ENCODE measurements at regions of chr2 and their contacts with region 1.

Region 1: GRCh38 chr2:45585267-45585861 is 25.7 kb downstream of the SRBD1 start:
- DNase-seq: peak in 1 of 2 experiments; percentile 28
- H3K4me3 ChIP-seq: no peak overlapping the region
- H3K4me3 Mint-ChIP-seq: no peak overlapping the region
- H3K27ac Mint-ChIP-seq: no peak overlapping the region
- H3K4me1 ChIP-seq: no peaks in the 10 kb centered on the region
- H3K4me1 Mint-ChIP-seq: no peaks in the 10 kb centered on the region
- H3K27me3 ChIP-seq: no peaks in the 10 kb centered on the region
- H3K27me3 Mint-ChIP-seq: no peaks in the 10 kb centered on the region
- CTCF ChIP-seq: peak; percentile 73 to 76

Region 2: GRCh38 chr2:45611020-45611737 is 25.8 kb after region 1 on chr2 and contains the start of gene SRBD1:
- CTCF ChIA-PET with region 1: interaction called, 5 read pairs
- POLR2A ChIA-PET with region 1: no interaction called
- intact Hi-C with region 1: loop called (anchors 1 kb)
- DNase-seq: peak; percentile 97 to 98
- H3K4me3 ChIP-seq: peak within 1 kb of the TSS; percentile 68
- H3K4me3 Mint-ChIP-seq: peak within 1 kb of the TSS; percentile 95
- H3K27ac Mint-ChIP-seq: peak within 1 kb of the TSS; percentile 97
- H3K4me1 ChIP-seq: peaks cover 26% of the 10 kb centered on the region
- H3K4me1 Mint-ChIP-seq: peaks cover 47% of the 10 kb centered on the region
- H3K27me3 ChIP-seq: no peaks in the 10 kb centered on the region
- H3K27me3 Mint-ChIP-seq: no peaks in the 10 kb centered on the region
- CTCF ChIP-seq: no peak
- total RNA-seq, gene SRBD1: 15.8 and 16.6 TPM in 2 replicates